ENCODE measurements at regions of chr9 and their contacts with region 1.

Region 1: GRCh38 chr9:114487607-114488300 is 17.5 kb downstream of the WHRN start:
- DNase-seq: peak; percentile 21
- H3K4me3 ChIP-seq: no peak overlapping the region
- H3K27ac ChIP-seq: no peak overlapping the region
- H3K27me3 ChIP-seq: peaks cover 8% of the 10 kb centered on the region
- CTCF ChIP-seq: peak; percentile 96

Region 2: GRCh38 chr9:114434878-114435311 is 52.9 kb before region 1 on chr9:
- CTCF ChIA-PET with region 1: interaction called, 16 read pairs
- POLR2A ChIA-PET with region 1: interaction called, 5 read pairs
- DNase-seq: no peak
- H3K4me3 ChIP-seq: no peak overlapping the region
- H3K27ac ChIP-seq: no peak overlapping the region
- H3K27me3 ChIP-seq: peaks cover 23% of the 10 kb centered on the region
- CTCF ChIP-seq: peak; percentile 75

Region 3: DNA sequence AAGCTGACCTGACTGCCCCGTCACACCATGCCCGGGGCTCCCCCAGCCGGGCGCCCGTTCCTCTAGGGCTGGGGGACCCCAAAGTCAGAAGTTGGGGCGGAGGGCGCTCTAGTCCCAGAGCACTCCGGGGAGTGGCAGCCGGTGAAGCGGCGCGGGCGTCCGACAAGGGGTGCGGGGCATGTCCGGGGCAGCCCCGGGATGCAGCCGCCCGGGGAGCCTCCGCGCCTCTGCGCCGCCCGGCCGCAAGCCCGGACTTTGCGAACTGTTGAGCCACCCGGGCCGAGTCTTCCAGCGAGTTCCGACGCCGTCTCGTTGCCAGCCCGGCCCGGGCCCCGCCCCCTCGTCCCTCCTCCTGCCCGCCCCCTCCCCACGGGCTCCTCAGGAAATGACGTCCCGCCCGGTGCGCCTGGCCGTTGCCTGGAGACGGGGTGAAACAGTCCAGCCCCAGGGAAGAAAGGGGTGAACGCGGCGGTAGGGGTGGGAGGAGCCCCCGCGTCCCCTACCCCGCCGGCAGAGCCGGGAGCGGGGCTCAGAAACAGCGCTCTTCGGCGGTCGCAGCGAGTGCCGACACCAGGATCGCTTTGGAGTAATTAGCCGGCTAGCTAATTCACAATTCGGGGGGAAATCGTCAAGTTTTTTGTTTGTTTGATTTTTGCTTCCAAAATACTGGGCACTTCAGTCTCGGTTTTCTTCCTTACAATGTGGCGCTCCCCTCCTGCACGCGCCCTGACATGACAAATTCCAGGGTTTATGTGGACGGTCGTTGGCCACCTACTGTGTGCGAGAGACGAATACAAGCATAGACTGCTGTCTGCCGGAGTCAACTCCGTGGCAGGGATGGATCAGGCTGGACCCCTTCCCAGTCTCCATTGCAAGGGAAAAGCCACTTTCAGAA is 17.7 kb after region 1 on chr9 and contains the start of gene WHRN:
- CTCF ChIA-PET with region 1: interaction called, 14 read pairs
- POLR2A ChIA-PET with region 1: no interaction called
- DNase-seq: peak; percentile 44
- H3K4me3 ChIP-seq: peak within 1 kb of the TSS; percentile 70
- H3K27ac ChIP-seq: no peak within 1 kb of the TSS
- H3K27me3 ChIP-seq: peaks cover 37% of the 10 kb centered on the region
- CTCF ChIP-seq: no peak
- polyA plus RNA-seq, gene WHRN: 1.1 and 1.2 TPM in 2 replicates

Region 4: DNA sequence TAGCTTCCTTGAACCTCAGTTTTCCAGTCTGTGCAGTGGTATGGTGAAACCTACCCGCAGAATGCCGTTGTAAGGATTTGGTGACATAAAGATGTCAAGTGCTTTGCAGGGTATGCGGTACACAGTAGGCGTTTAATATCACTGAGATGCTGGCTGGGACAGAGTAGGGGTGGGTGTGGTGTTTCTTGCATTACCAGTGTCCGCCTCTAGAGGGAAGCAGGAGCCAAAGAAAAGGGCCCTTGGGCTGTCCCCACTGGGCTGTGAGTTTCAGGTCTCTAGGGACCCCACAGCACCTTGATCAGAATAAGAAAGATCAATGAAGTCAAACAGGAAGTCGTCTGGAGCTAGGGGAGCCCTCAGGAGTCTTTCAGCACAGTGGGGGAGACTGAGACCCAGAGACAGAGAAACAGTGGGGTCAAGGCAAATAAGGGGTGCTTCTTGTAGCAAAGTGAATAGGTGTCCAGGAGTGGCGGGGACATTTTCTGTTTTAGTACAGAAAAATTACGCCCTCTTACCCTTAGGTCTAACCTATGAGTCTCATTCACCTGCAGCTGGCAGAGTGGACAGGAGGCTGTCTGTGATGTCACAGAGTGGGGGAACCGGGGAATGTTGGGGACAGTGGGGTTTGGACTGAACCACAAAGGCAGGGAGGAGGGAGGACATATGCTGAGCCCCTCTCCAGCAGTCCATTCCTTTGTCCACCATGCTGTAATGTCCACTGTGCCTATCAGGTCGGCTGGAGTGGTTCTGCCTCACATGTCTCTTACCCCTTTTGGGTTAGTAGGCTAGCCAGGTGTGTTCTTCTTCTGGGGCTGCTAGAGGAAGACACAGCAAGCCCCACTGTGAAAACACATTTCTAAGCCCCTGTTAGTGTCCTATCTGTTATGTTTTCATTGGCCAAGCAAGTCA is 174.6 kb after region 1 on chr9:
- CTCF ChIA-PET with region 1: interaction called, 11 read pairs
- POLR2A ChIA-PET with region 1: no interaction called
- DNase-seq: no peak
- H3K4me3 ChIP-seq: no peak overlapping the region
- H3K27ac ChIP-seq: no peak overlapping the region
- H3K27me3 ChIP-seq: peaks cover 17% of the 10 kb centered on the region
- CTCF ChIP-seq: peak; percentile 93

Measured in AG04450 (cell line).